Activated naive CD4-positive, alpha-beta T cell treated with anti-CD3 and anti-CD28 coated beads, Interleukin-2, amount 10 ng/mL, durations not matched to agents 7 days and 5 days (primary cell): ENCODE measurements at regions of chr14 and their contacts with region 1.

Region 1: DNA sequence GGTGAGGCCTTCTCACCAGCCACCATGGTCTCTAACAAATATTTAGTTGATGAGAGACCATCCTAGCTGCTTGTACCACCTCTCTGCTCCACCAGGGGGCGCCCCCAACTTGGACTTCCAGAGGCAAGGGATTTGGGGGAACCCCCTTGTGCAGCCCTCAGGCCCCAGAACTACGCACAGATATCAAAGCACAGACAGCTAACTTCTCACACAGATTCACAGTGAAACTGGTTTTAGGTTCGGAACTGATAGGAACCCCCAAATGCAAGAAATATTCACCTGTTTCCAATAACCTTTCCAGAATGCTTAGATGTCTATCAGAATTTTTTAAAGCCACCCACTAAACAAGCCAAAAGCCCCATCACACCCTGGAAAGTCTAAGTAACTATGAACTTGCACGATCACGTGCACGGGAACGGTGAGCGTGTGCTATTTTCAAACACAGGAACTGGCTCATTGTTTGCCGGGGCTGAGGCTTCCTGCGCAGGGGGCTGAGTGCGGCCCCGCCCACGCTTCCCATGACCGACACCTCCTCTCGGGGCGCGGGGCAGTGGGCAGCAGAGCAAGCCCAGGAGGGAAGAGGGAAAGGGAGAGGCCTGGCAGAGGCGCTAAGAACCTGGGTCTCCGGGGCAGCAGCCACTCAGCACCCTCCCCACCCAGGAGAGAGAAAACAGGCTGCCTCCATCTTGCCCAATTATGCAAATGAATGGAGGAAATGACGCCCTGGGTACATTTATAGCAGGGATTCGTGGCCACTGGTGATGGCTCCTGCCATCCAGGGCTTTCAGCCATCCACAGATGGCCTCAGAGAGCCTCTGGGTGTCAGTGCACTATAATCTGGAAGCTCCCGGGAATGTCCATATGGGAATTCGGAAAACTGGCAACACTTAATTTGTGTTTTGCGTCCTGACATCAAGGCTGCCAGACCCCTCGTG is 79.4 kb upstream of the GPR68 start:
- DNase-seq: peak; percentile 94
- H3K4me3 Mint-ChIP-seq: peak overlapping the region; percentile 61
- H3K27ac Mint-ChIP-seq: peak overlapping the region; percentile 97
- H3K4me1 Mint-ChIP-seq: peaks cover 77% of the 10 kb centered on the region
- H3K27me3 Mint-ChIP-seq: no peaks in the 10 kb centered on the region

Region 2: DNA sequence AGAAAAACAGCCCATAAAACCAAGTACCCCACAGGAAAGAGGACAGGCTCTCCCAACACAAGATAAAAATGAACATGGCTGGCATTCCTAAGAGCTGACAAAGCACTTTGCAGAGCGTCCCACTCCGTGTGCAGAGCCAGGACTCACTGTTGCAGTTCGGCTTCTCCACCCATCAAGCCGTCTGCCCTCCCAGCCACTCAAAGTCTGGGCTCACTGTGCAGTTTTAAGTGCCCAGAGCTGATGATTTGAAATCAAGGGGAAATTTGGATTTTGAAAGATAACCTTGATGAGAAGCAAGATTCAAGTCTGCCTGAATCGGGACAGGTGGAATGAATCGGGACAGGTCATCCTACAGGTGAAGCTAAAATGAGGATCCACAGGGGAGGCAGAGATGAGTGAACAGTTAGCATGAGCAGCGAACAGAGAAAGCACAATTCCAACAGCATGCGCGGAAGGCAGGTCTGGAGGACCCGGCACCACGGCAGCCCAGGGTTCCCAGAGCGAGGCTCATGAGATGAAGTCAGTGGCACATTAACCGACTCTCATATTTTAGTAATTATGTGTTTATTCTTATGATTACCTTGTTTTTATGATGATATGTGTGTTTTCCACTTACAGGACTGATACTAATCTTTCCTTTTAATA is 39.7 kb before region 1 on chr14:
- CTCF ChIA-PET with region 1: no interaction called
- DNase-seq: no peak
- H3K4me3 Mint-ChIP-seq: no peak overlapping the region
- H3K27ac Mint-ChIP-seq: peak overlapping the region; percentile 34
- H3K4me1 Mint-ChIP-seq: peaks cover 19% of the 10 kb centered on the region
- H3K27me3 Mint-ChIP-seq: no peaks in the 10 kb centered on the region

Region 3: DNA sequence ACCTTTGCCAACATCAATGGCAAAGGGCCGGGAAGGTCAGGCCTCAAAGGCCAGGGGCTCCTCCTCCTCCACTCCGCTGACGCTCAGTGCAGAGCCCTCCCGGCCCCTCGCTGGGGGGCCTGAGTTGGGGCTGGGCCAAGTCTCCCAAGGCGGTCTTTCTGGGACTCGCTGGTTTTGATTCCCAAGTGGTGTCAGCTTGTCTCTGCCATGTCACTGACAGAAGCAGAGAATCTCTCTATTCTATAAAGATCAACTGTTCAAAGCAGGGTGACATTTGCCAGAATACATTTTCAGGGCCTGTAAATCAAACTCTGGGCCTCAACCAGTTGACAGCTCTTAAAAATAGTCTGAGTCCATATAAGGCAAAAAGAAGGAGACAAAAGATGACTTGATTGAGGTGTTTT is 17.8 kb after region 1 on chr14:
- CTCF ChIA-PET with region 1: interaction called, 17 read pairs
- DNase-seq: no peak
- H3K4me3 Mint-ChIP-seq: no peak overlapping the region
- H3K27ac Mint-ChIP-seq: no peak overlapping the region
- H3K4me1 Mint-ChIP-seq: peaks cover 15% of the 10 kb centered on the region
- H3K27me3 Mint-ChIP-seq: no peaks in the 10 kb centered on the region

Region 4: DNA sequence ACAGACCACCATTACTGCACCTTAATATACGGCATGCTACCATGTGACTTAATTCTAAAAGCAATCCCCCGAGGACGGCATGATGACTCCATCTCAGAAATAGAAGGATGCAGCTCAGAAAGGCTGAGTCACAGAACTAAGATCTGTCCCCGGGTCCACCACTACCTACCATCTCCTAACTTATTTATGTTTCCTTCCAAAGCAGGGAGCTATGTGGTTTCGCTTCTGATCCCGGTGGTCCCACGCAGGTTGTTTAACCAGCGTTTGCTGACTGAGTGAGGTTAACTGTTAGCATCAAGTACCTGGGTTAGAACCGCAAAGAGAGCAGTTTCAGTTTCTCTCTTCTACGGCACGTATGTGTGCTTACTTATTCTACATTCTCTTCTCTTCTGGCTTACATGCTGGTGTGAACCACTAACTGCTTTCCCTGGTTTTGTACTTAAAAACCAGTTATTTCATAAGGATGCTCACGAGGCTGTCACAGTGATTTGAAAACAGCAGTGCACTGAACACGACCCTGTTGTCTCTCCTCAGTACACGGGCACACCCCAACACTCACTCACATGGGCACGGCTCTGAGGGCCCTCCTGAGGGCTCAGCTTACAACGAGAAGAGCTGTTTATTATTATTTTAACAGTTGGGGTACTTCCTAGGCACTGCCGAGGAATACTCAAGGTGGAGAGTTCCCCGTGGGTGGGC is 27.0 kb after region 1 on chr14:
- CTCF ChIA-PET with region 1: interaction called, 26 read pairs
- DNase-seq: peak; percentile 83
- H3K4me3 Mint-ChIP-seq: peak overlapping the region; percentile 63
- H3K27ac Mint-ChIP-seq: peak overlapping the region; percentile 93
- H3K4me1 Mint-ChIP-seq: peaks cover 94% of the 10 kb centered on the region
- H3K27me3 Mint-ChIP-seq: no peaks in the 10 kb centered on the region

Region 5: DNA sequence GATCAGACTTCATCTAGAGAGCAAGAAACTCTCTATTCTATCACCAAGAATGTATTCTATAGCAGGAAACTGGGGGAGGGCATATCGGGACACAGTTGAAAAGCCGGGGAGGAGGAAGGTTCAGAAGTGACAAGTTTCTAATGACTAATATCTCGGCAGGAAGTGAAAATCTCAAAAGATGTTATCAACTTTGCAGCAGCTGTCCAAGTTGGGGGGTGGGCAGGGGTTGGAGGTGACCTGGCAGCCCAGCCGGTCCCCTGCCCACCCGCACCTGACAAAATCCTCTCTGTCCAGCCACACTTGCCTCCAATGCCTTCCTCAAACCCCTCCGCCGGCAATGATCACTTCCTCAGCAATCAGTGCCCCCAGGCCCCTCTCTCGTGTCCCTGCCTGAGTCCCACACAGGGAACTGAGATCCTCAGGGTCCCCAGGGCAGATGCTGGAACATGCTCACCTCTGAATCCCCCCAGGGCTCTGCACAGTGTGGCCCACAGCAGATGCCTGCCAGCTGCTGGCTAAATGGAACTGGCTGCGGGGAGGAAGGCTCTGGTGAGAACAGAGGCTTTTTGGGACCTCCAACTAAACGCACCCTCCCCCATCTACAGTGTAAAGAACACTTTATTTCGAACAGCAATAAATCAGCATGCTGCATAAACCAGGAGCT is 49.8 kb after region 1 on chr14:
- CTCF ChIA-PET with region 1: interaction called, 14 read pairs
- DNase-seq: peak; percentile 71
- H3K4me3 Mint-ChIP-seq: peak overlapping the region; percentile 72
- H3K27ac Mint-ChIP-seq: peak overlapping the region; percentile 95
- H3K4me1 Mint-ChIP-seq: peaks cover 100% of the 10 kb centered on the region
- H3K27me3 Mint-ChIP-seq: no peaks in the 10 kb centered on the region

Region 6: GRCh38 chr14:91396959-91397815 is 73.2 kb after region 1 on chr14:
- CTCF ChIA-PET with region 1: interaction called, 11 read pairs
- DNase-seq: peak; percentile 87
- H3K4me3 Mint-ChIP-seq: peak overlapping the region; percentile 72
- H3K27ac Mint-ChIP-seq: peak overlapping the region; percentile 90
- H3K4me1 Mint-ChIP-seq: peaks cover 93% of the 10 kb centered on the region
- H3K27me3 Mint-ChIP-seq: no peaks in the 10 kb centered on the region

Region 7: DNA sequence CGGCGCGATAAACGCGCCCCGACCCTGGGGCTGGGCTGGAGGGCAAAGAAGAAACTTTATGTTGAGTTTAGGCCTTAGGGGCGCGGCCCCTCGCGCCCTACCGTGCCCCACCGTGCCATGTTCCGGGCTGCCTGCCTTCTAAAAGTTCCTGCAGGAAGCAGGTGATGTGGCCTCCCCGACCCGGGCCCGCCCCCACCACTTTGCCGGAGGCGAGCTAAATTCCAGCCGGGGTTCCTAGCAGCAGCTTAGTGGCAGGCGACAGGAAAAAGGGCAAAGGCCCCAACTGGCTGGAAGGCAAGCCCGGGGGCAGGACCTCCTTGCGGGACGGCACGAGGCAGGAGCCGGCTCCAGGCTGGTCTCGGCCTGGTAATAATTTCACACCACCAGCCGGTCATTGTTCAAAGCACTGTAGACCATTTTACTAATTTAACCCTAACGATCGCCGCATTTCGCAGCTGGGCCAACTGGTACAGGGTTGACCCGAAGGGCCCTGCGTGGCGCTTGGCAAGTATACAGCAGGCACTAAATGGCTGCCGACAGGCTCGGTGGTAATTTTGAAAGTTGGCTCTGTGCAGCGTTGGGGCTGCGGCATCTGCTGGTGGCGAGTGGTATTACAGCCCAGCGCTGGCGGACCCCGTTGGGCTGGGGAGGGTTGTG is 94.6 kb after region 1 on chr14:
- CTCF ChIA-PET with region 1: interaction called, 85 read pairs
- DNase-seq: peak; percentile 84
- H3K4me3 Mint-ChIP-seq: peak overlapping the region; percentile 69
- H3K27ac Mint-ChIP-seq: peak overlapping the region; percentile 91
- H3K4me1 Mint-ChIP-seq: peaks cover 35% of the 10 kb centered on the region
- H3K27me3 Mint-ChIP-seq: peaks cover 11% of the 10 kb centered on the region

Region 8: DNA sequence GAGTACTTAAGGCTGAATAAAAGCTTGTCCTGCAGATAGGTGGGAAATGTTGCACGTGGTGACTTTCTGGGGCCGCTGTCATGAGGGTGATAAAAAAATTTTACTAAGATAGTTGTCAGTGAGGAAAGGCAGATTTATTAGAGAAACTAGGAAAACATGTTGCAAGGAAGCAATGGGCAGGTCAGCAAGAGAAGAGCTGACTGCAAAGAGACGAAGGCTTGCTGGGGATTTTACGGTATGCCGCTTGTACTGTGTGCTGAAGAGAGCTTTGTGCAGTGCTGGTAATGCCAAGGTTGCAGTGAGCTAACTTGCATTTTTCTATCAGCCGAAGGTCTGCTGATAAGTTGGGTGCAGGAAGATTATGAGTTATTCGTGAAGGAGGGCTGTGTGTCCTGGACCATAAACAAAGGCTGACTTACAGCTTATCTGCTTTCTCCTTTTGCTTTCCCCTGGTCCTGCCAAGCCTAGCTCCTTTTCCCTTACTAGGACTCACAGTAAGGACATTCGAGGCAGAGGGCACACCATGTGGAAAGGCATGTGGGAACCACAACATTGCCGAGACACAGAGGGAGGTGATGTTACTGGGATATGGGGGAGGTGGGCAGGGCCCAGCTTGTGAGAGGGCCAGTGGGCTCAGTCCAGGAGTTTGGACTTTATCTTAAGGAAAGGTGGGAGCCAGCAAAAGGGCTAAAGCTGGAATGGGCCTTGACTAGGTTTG is 101.0 kb after region 1 on chr14:
- CTCF ChIA-PET with region 1: interaction called, 85 read pairs
- DNase-seq: no peak
- H3K4me3 Mint-ChIP-seq: no peak overlapping the region
- H3K27ac Mint-ChIP-seq: no peak overlapping the region
- H3K4me1 Mint-ChIP-seq: peaks cover 18% of the 10 kb centered on the region
- H3K27me3 Mint-ChIP-seq: peaks cover 14% of the 10 kb centered on the region

Region 9: DNA sequence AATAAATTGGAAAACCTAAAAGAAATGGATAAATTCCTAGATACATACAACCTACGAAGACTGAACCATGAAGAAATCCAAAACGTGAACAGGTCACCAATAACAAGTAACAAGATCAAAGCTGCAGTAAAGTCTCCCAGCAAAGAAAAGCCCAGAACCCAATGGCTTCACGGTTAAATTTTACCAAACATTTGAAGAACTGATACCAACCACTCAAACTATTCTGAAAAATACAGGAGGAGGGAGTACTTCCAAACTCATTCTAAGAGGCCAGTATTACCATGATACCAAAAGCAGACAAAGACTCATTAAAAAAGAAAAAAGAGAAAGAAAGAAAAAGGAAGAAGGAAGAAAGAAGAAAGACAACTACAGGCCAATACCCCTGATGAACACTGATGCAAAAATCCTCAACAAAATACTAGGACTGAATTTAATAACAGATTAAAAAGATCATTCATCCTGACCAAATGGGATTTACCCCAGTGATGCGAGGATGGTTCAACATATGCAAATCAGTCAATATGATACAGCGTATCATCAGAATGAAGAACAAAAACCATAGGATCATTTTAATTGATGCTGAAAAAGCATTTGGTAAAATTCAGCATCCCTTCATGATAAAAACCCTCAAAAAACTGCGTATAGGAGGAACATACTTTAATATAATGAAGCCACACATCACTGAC is 120.5 kb after region 1 on chr14:
- CTCF ChIA-PET with region 1: no interaction called
- DNase-seq: no peak
- H3K4me3 Mint-ChIP-seq: no peak overlapping the region
- H3K27ac Mint-ChIP-seq: no peak overlapping the region
- H3K4me1 Mint-ChIP-seq: no peaks in the 10 kb centered on the region
- H3K27me3 Mint-ChIP-seq: peaks cover 25% of the 10 kb centered on the region